Upper lobe of right lung (tissue), 1 donor: ENCODE measurements at regions of chr9 and their contacts with region 1.

Region 1: GRCh38 chr9:136631038-136632000 is 31.4 kb upstream of the EGFL7 start:
- DNase-seq: peak; percentile 91
- ATAC-seq: peak; percentile 92
- H3K4me3 ChIP-seq: no peak overlapping the region
- H3K27ac ChIP-seq: no peak overlapping the region
- H3K4me1 ChIP-seq: peaks cover 24% of the 10 kb centered on the region
- H3K27me3 ChIP-seq: no peaks in the 10 kb centered on the region
- CTCF ChIP-seq: peak; percentile 86

Region 2: DNA sequence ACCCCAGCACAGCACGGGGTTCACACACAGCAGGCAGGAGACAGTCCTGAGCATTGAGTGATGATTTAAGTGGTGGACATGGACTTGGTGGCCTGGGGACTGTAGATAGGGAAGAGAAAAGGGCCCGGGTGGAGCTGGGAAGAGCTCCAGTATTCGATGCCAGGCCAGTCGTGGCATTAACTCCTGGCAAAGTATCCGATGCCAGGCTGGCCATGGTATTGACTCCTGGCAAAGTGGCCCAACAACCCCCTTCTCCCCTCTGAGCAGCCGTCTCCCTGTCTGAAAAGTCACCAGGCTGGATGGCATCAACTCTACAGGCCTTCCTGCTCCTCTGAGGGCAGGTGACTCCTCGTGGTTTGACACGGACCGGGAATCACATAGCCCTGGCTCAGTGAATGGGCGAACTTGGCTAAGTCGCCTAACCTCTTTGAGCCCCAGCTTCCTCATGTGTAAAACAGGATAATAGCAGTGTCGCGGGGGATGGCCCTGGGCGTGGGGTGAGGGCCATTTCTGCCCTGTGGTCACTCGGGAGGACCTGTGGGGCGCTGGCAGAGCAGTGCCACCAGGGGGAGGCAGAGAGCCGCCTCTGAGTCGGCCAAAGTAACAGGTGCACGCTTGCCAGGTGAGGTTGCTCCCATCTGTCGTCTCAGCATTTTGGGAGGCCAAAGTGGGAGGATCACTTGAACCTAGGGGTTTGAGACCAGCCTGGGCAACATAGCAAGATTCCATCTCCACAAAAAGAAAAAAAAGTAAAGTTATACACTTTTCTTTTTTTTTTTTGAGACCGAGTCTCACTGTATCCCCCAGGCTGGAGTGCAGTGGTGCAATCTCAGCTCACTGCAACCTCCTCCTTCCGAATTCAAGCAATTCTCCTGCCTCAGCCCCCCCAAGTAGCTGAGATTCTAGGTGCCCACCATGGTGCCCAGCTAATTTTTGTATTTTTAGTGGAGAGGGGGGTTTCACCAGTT is 142.8 kb before region 1 on chr9:
- intact Hi-C with region 1: loop called (anchors 2 kb)
- DNase-seq: peak; percentile 89
- ATAC-seq: peak; percentile 67
- H3K4me3 ChIP-seq: no peak overlapping the region
- H3K27ac ChIP-seq: no peak overlapping the region
- H3K4me1 ChIP-seq: peaks cover 14% of the 10 kb centered on the region
- H3K27me3 ChIP-seq: no peaks in the 10 kb centered on the region
- CTCF ChIP-seq: peak; percentile 98

Region 3: GRCh38 chr9:136545966-136546698 is 85.2 kb before region 1 on chr9 and contains the start of gene NOTCH1:
- intact Hi-C with region 1: loop called (anchors 10 kb)
- DNase-seq: peak; percentile 98
- ATAC-seq: peak; percentile 88
- H3K4me3 ChIP-seq: peak within 1 kb of the TSS; percentile 86
- H3K27ac ChIP-seq: peak within 1 kb of the TSS; percentile 97
- H3K4me1 ChIP-seq: peaks cover 39% of the 10 kb centered on the region
- H3K27me3 ChIP-seq: no peaks in the 10 kb centered on the region
- CTCF ChIP-seq: no peak
- total RNA-seq, gene NOTCH1: 114 TPM

Region 4: GRCh38 chr9:136587944-136588661 is 43.2 kb before region 1 on chr9:
- intact Hi-C with region 1: no loop called
- DNase-seq: no peak
- ATAC-seq: no peak
- H3K4me3 ChIP-seq: no peak overlapping the region
- H3K27ac ChIP-seq: peak overlapping the region; percentile 17
- H3K4me1 ChIP-seq: peaks cover 41% of the 10 kb centered on the region
- H3K27me3 ChIP-seq: no peaks in the 10 kb centered on the region
- CTCF ChIP-seq: no peak